Psoas muscle (tissue), 8 donors: ENCODE measurements at regions of chr17 and their contacts with region 1.

Region 1: DNA sequence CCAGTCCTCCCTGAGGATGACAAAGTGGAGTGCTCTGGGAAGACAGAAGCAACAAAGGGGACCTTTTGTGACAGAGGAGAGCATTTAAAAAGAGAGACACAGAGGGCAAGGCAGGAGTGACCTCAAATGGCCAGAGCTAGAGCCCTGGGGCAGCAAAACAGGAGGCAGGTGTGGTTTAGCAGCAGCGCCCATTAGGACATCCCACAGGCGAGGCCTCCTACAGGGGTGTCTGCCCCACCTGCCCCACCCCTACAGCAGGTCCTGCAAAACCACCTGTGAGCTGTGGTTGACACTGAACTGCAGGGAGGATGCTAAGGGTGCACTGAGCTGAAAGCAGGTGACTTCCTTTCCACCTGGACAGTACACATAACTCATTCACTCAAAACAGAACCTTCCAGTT is 49.4 kb downstream of the CDRT4 start:
- DNase-seq: no peak
- ATAC-seq: no peak
- H3K4me3 ChIP-seq: no peak overlapping the region
- H3K27ac ChIP-seq: no peak overlapping the region
- H3K4me1 ChIP-seq: peaks cover 20% of the 10 kb centered on the region
- H3K27me3 ChIP-seq: no peaks in the 10 kb centered on the region
- CTCF ChIP-seq: no peak

Region 2: GRCh38 chr17:15432807-15433600 is 15.0 kb after region 1 on chr17:
- intact Hi-C with region 1: loop called (anchors 1 kb)
- DNase-seq: no peak
- ATAC-seq: no peak
- H3K4me3 ChIP-seq: no peak overlapping the region
- H3K27ac ChIP-seq: peak overlapping the region; percentile 92
- H3K4me1 ChIP-seq: peaks cover 50% of the 10 kb centered on the region
- H3K27me3 ChIP-seq: no peaks in the 10 kb centered on the region
- CTCF ChIP-seq: no peak

Region 3: GRCh38 chr17:15475631-15476354 is 57.8 kb after region 1 on chr17:
- intact Hi-C with region 1: no loop called
- DNase-seq: no peak
- ATAC-seq: peak; percentile 39 to 89 (median 72)
- H3K4me3 ChIP-seq: no peak overlapping the region
- H3K27ac ChIP-seq: peak overlapping the region; percentile 15
- H3K4me1 ChIP-seq: no peaks in the 10 kb centered on the region
- H3K27me3 ChIP-seq: no peaks in the 10 kb centered on the region
- CTCF ChIP-seq: no peak